ENCODE measurements at regions of chr14 and their contacts with region 1.

Region 1: DNA sequence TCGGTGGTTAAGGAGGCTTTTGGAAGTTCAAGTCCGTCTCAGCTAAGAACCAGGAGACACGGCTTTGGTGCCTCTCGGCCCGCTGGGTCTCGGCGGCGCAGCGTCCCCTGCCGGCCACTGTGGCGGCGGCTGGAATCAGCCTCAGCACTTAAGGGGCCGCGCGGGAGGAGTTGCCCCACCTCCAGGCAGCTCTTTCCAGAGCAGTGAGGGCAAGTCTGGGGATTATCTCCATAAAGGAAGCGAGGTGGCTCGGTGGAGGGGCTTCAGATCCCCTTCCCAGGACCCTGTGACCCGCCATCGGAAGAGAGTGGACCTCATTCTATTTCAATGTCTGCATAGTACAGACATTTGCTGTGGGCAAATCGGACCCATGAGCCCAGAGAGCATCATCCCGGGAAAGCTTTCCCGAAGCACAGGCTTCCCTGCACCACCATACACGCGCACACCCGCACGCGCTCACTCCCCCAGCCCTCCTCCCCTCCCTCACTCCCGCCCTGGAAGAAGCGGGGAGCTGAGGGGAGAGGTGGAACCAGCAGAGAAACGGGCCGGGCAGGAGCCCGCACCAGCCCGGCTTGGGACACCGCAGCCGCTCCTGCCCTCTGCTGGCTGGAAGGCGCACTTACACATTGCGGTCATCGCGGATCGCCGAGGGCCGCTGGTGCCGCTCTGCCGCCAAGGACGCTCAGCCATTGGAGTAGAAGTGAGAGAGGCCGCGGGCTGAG is 15.9 kb downstream of the RNASE2 start:
- DNase-seq: peak; percentile 84
- H3K4me3 Mint-ChIP-seq: peak overlapping the region; percentile 84
- H3K27ac Mint-ChIP-seq: peak overlapping the region; percentile 39
- H3K4me1 Mint-ChIP-seq: peaks cover 16% of the 10 kb centered on the region
- H3K27me3 Mint-ChIP-seq: peaks cover 58% of the 10 kb centered on the region

Region 2: DNA sequence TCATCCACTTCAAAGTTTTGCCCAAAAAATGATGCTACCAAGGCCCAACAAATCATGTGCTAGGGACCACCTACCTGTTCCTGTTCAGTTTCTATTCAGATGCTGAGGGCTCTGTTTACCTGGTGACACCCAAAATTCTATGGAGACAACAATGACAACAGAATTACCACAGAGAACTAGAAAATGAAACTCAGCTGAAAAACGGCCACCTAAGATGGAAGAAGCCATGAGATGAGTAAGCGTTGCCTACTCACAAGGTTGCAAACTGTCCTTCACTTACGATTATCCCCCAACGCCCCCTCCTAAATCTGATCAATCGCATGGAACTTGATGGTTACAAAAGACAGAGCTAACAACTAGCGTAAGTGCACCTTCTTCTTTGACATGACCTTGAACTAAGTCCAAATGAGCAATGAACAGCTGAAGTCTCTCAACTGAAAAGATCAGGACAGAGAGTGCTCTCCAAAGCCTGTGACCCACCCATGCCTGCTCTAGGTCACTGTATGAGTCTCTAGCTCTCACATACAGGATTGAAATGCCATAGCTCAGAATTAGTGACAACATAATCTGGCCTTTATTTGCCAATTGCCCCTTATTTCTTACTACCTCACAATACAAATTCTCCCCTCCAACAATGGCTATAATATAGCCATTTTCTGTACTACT is 383.5 kb before region 1 on chr14 and contains the start of gene RNASE11:
- CTCF ChIA-PET with region 1: no interaction called
- DNase-seq: no peak
- H3K4me3 Mint-ChIP-seq: no peak within 1 kb of the TSS
- H3K27ac Mint-ChIP-seq: no peak within 1 kb of the TSS
- H3K4me1 Mint-ChIP-seq: peaks cover 3% of the 10 kb centered on the region
- H3K27me3 Mint-ChIP-seq: peaks cover 14% of the 10 kb centered on the region

Region 3: GRCh38 chr14:20697273-20698017 is 273.7 kb before region 1 on chr14:
- CTCF ChIA-PET with region 1: interaction called, 21 read pairs
- DNase-seq: peak; percentile 78
- H3K4me3 Mint-ChIP-seq: no peak overlapping the region
- H3K27ac Mint-ChIP-seq: no peak overlapping the region
- H3K4me1 Mint-ChIP-seq: no peaks in the 10 kb centered on the region
- H3K27me3 Mint-ChIP-seq: peaks cover 12% of the 10 kb centered on the region

Region 4: DNA sequence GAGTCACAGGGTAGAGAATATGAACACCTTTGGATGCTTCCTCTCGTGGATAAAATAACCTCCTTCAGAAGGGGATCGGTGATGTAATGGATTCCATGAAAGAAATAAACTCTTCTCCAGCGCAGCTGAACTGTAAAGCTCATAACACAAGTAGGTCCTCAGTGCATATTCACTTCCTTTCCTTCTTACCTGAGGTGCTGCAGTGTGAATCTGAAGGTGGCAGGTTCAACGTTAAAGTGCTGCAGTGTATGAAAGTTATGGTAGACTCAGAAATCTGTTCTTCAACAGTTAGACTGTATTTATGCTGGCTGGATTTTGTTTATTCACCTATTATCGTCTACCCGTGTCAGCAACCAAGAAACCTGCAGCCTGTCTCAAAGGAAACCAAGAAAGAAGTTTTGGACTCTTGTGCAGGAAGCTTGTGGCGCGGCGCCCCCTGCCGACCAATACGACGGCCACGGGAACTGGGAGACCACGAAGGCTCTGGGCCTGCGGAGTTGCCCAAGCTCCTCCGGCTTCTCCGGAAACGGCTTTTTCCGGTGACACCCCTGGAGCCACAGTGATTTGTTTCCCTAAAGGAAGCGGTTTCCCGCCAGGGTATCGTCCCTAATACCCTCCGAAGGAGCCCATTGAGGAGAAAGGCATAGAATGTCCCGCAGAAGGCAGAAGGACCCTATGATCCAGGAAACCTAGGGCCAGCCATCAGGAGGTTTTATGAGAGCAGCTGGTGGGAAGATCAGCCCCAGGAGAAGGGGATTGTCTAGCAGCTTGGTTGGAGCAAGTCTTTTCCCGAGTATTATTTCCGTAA is 97.6 kb before region 1 on chr14:
- CTCF ChIA-PET with region 1: interaction called, 15 read pairs
- DNase-seq: peak; percentile 86
- H3K4me3 Mint-ChIP-seq: no peak overlapping the region
- H3K27ac Mint-ChIP-seq: no peak overlapping the region
- H3K4me1 Mint-ChIP-seq: peaks cover 16% of the 10 kb centered on the region
- H3K27me3 Mint-ChIP-seq: peaks cover 42% of the 10 kb centered on the region

Region 5: GRCh38 chr14:20986811-20987210 is 15.7 kb after region 1 on chr14:
- CTCF ChIA-PET with region 1: interaction called, 17 read pairs
- DNase-seq: no peak
- H3K4me3 Mint-ChIP-seq: no peak overlapping the region
- H3K27ac Mint-ChIP-seq: no peak overlapping the region
- H3K4me1 Mint-ChIP-seq: peaks cover 34% of the 10 kb centered on the region
- H3K27me3 Mint-ChIP-seq: peaks cover 12% of the 10 kb centered on the region

Region 6: GRCh38 chr14:21039585-21040369 is 68.6 kb after region 1 on chr14:
- CTCF ChIA-PET with region 1: interaction called, 12 read pairs
- DNase-seq: peak; percentile 36
- H3K4me3 Mint-ChIP-seq: no peak overlapping the region
- H3K27ac Mint-ChIP-seq: no peak overlapping the region
- H3K4me1 Mint-ChIP-seq: peaks cover 2% of the 10 kb centered on the region
- H3K27me3 Mint-ChIP-seq: peaks cover 56% of the 10 kb centered on the region

Region 7: GRCh38 chr14:21081521-21082142 is 110.5 kb after region 1 on chr14:
- CTCF ChIA-PET with region 1: no interaction called
- DNase-seq: no peak
- H3K4me3 Mint-ChIP-seq: no peak overlapping the region
- H3K27ac Mint-ChIP-seq: no peak overlapping the region
- H3K4me1 Mint-ChIP-seq: peaks cover 2% of the 10 kb centered on the region
- H3K27me3 Mint-ChIP-seq: peaks cover 27% of the 10 kb centered on the region

Measured in activated naive CD4-positive, alpha-beta T cell treated with anti-CD3 and anti-CD28 coated beads, Interleukin-2, amount 10 ng/mL, durations not matched to agents 7 days and 5 days (primary cell).